Caco-2 (cell line): ENCODE measurements at regions of chr2 and their contacts with region 1.

Region 1: GRCh38 chr2:46164581-46165301 is 132.5 kb upstream of the EPAS1 start:
- DNase-seq: peak; percentile 74 to 89
- H3K4me3 ChIP-seq: no peak overlapping the region
- H3K4me3 Mint-ChIP-seq: peak overlapping the region; percentile 37
- H3K27ac Mint-ChIP-seq: peak overlapping the region; percentile 92
- H3K4me1 ChIP-seq: peaks cover 56% of the 10 kb centered on the region
- H3K4me1 Mint-ChIP-seq: peaks cover 56% of the 10 kb centered on the region
- H3K27me3 ChIP-seq: no peaks in the 10 kb centered on the region
- H3K27me3 Mint-ChIP-seq: no peaks in the 10 kb centered on the region
- CTCF ChIP-seq: no peak

Region 2: DNA sequence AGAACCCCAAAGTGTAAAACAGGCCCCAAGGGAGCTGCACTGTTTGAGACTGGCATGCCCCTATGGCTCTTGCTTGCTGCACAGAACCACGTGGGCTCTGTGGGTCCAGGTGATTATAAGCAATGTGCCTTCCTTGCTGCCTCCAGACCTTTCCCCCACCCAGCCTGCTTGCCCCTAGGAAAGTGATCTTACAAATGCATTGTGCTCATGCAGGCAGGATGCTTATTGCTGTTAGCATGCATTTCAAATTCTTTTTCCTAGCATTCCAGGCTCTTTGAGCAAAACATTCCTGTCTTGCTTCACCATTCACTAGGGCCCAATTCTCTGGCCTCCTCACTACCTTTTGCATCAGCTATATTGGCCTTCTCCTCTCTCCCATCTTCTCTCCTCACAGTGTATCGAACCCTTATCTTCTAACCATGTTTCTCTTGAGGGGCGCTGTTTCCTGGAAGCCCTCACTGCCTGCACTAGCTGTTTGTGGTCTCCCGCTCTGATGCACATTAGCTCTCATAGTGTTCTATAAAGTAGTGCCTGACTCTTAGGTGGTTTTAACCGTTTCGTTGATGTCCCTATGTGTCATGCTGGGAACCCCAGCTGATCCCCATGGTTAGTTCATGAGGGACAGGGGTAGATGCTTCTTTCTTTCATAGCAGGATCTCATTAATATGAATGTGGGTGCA is 20.5 kb before region 1 on chr2:
- CTCF ChIA-PET with region 1: no interaction called
- POLR2A ChIA-PET with region 1: no interaction called
- intact Hi-C with region 1: loop called (anchors 2 kb)
- DNase-seq: no peak
- H3K4me3 ChIP-seq: no peak overlapping the region
- H3K4me3 Mint-ChIP-seq: no peak overlapping the region
- H3K27ac Mint-ChIP-seq: no peak overlapping the region
- H3K4me1 ChIP-seq: peaks cover 13% of the 10 kb centered on the region
- H3K4me1 Mint-ChIP-seq: peaks cover 14% of the 10 kb centered on the region
- H3K27me3 ChIP-seq: no peaks in the 10 kb centered on the region
- H3K27me3 Mint-ChIP-seq: no peaks in the 10 kb centered on the region
- CTCF ChIP-seq: no peak

Region 3: GRCh38 chr2:46202987-46203386 is 38.2 kb after region 1 on chr2:
- CTCF ChIA-PET with region 1: no interaction called
- POLR2A ChIA-PET with region 1: no interaction called
- intact Hi-C with region 1: no loop called
- DNase-seq: no peak
- H3K4me3 ChIP-seq: no peak overlapping the region
- H3K4me3 Mint-ChIP-seq: no peak overlapping the region
- H3K27ac Mint-ChIP-seq: no peak overlapping the region
- H3K4me1 ChIP-seq: peaks cover 10% of the 10 kb centered on the region
- H3K4me1 Mint-ChIP-seq: peaks cover 14% of the 10 kb centered on the region
- H3K27me3 ChIP-seq: no peaks in the 10 kb centered on the region
- H3K27me3 Mint-ChIP-seq: no peaks in the 10 kb centered on the region
- CTCF ChIP-seq: no peak

Region 4: GRCh38 chr2:46230115-46230571 is 65.4 kb after region 1 on chr2:
- CTCF ChIA-PET with region 1: interaction called, 3 read pairs
- POLR2A ChIA-PET with region 1: no interaction called
- intact Hi-C with region 1: loop called (anchors 2 kb)
- DNase-seq: no peak
- H3K4me3 ChIP-seq: no peak overlapping the region
- H3K4me3 Mint-ChIP-seq: no peak overlapping the region
- H3K27ac Mint-ChIP-seq: peak overlapping the region; percentile 32
- H3K4me1 ChIP-seq: peaks cover 3% of the 10 kb centered on the region
- H3K4me1 Mint-ChIP-seq: peaks cover 16% of the 10 kb centered on the region
- H3K27me3 ChIP-seq: no peaks in the 10 kb centered on the region
- H3K27me3 Mint-ChIP-seq: peaks cover 3% of the 10 kb centered on the region
- CTCF ChIP-seq: no peak

Region 5: DNA sequence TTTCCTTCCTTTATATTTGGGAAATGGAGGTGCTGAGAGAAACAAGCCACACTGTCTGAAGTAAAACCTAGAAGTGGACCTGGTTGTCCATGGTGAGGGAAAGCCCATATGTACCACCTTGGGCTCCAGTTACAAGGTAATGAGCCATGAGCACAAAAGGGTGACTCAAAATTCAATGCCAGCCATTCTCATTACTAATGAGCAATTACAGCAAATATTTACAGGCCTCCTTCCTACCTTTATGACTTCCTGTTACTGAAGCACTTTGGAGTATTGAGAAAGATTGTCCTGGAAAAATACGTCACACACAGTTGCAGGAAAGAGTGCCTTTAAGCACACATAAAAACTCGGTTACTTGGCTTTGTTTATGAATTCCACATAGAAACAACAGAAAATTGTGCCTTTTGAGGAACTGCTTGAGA is 141.6 kb after region 1 on chr2:
- CTCF ChIA-PET with region 1: no interaction called
- POLR2A ChIA-PET with region 1: no interaction called
- intact Hi-C with region 1: no loop called
- DNase-seq: peak in 1 of 2 experiments; percentile 42
- H3K4me3 ChIP-seq: no peak overlapping the region
- H3K4me3 Mint-ChIP-seq: no peak overlapping the region
- H3K27ac Mint-ChIP-seq: peak overlapping the region; percentile 49
- H3K4me1 ChIP-seq: peaks cover 72% of the 10 kb centered on the region
- H3K4me1 Mint-ChIP-seq: peaks cover 75% of the 10 kb centered on the region
- H3K27me3 ChIP-seq: no peaks in the 10 kb centered on the region
- H3K27me3 Mint-ChIP-seq: no peaks in the 10 kb centered on the region
- CTCF ChIP-seq: no peak